Sciatic nerve (tissue), 2 donors: ENCODE measurements at regions of chr4 and their contacts with region 1.

Region 1: GRCh38 chr4:28948501-28948900 is 1771.7 kb upstream of the PCDH7 start:
- DNase-seq: no peak
- ATAC-seq: no peak

Region 2: GRCh38 chr4:27429364-27429871 is 1519.1 kb before region 1 on chr4:
- intact Hi-C with region 1: loop called (anchors 5 kb)
- DNase-seq: no peak
- ATAC-seq: no peak

Region 3: DNA sequence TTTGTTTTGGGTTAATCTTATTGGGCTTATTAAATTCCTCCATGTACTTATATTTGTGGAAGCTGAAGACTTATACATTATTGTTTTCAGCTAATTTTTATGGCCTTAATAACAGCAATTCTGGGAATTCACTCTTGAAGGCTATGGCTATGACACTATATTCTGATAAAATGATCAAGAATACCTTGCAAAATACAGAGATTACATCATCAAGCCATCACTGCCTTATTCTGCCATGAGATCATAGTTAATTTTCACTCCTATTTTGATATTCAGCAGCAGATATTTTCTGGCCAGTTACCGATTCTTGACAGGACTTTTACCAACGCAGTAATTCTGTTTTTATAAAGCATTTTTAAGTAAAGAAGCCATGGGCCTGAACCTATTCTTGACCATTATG is 151.2 kb after region 1 on chr4:
- intact Hi-C with region 1: no loop called
- DNase-seq: no peak
- ATAC-seq: no peak